ENCODE measurements at regions of chr1 and their contacts with region 1.

Region 1: DNA sequence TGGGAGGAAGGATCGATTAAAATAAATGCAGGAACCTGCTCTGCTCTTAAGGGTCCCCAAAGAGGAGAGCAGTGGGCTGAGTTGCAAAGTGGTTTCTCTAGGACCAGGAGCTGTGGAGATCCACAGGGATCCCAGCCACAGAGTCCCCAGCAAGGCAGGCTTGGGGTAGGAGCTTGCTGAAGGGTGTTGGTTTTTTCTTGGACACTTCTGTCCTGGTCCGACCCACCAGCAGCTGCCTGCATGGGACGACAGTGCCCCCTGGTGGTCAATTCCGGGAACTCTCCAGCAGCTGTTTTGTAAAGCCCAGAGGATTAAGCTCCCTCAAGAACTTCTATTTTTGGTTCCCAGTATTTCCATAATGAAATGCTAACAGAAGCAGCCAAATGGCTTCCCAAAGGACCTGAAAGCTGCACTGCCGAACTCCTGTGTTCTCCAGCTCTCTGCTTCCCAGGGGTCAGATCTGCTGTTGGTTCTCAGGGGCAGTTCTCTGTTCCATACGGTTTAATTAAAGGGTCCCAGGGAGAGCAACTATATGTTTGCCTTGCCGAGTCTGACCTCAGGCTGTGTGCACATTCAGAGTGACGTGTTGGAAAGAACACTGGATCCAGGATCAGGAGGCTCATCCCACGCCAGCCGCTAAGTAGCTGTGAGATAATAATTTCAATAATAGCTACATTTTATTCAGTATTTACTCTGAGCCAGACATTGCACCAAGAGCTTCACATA is 23.2 kb downstream of the NENF start:
- DNase-seq: peak; percentile 89
- ATAC-seq: peak; percentile 78
- H3K4me3 Mint-ChIP-seq: no peak overlapping the region
- H3K27ac Mint-ChIP-seq: no peak overlapping the region
- H3K4me1 Mint-ChIP-seq: peaks cover 15% of the 10 kb centered on the region
- H3K27me3 Mint-ChIP-seq: no peaks in the 10 kb centered on the region

Region 2: GRCh38 chr1:211675230-211676105 is 780.5 kb before region 1 on chr1 and contains the start of gene NEK2:
- CTCF ChIA-PET with region 1: interaction called, 88 read pairs
- POLR2A ChIA-PET with region 1: no interaction called
- DNase-seq: peak; percentile 95
- ATAC-seq: peak; percentile 95
- H3K4me3 Mint-ChIP-seq: peak within 1 kb of the TSS; percentile 97
- H3K27ac Mint-ChIP-seq: peak within 1 kb of the TSS; percentile 87
- H3K4me1 Mint-ChIP-seq: peaks cover 33% of the 10 kb centered on the region
- H3K27me3 Mint-ChIP-seq: peaks cover 3% of the 10 kb centered on the region
- total RNA-seq, gene NEK2: 52.6 to 54.1 TPM

Region 3: DNA sequence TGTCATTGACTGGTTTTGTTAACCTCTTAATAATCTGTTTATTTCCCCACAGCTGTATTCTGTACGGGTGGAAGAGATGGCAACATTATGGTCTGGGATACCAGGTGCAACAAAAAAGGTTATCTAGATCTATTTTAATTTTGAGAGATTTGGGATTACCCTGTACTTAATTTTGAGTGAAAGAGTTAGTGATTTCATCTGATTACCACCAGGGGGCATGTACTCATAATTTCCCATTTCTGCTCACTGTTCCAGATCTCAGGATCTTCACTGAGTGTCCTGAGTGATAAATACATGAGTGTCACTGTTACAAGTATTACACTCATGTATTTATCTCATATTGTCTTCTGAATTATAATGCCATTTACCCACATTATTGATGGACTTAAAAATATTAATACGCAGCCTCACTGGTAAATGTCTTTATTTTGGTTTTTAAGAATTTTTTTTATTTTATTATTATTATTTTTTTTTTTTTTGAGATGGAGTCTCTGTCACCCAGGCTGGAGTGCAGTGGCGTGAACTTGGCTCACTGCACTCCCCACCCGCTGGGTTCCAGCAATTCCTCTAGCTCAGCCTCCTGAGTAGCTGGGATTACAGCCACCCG is 393.0 kb before region 1 on chr1:
- CTCF ChIA-PET with region 1: interaction called, 101 read pairs
- POLR2A ChIA-PET with region 1: no interaction called
- DNase-seq: no peak
- ATAC-seq: peak; percentile 60
- H3K4me3 Mint-ChIP-seq: no peak overlapping the region
- H3K27ac Mint-ChIP-seq: no peak overlapping the region
- H3K4me1 Mint-ChIP-seq: peaks cover 3% of the 10 kb centered on the region
- H3K27me3 Mint-ChIP-seq: no peaks in the 10 kb centered on the region

Region 4: GRCh38 chr1:212101735-212102134 is 354.2 kb before region 1 on chr1:
- CTCF ChIA-PET with region 1: interaction called, 18 read pairs
- POLR2A ChIA-PET with region 1: no interaction called
- DNase-seq: no peak
- ATAC-seq: no peak
- H3K4me3 Mint-ChIP-seq: no peak overlapping the region
- H3K27ac Mint-ChIP-seq: no peak overlapping the region
- H3K4me1 Mint-ChIP-seq: peaks cover 6% of the 10 kb centered on the region
- H3K27me3 Mint-ChIP-seq: no peaks in the 10 kb centered on the region

Region 5: DNA sequence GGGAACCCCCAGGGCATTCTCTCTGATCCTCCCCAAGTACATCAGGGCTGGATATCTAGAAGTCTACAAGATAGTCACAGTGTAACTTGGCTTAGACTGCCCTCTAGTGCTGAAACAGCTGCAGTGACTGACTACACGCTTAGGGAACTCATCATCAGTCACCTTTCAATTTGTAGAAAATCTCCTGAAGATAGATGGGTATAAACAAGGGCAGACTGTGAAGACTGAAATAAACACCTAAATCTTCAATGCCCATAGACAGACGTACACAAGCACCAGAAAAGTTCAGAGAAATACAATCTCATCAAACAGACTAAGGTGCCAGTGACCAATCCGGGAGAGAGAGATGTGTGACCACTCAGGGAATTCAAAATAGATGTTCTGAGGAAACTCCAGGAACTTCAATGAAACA is 87.9 kb before region 1 on chr1:
- CTCF ChIA-PET with region 1: interaction called, 40 read pairs
- POLR2A ChIA-PET with region 1: no interaction called
- DNase-seq: peak; percentile 76
- ATAC-seq: peak; percentile 92
- H3K4me3 Mint-ChIP-seq: no peak overlapping the region
- H3K27ac Mint-ChIP-seq: no peak overlapping the region
- H3K4me1 Mint-ChIP-seq: no peaks in the 10 kb centered on the region
- H3K27me3 Mint-ChIP-seq: no peaks in the 10 kb centered on the region

Region 6: GRCh38 chr1:212440419-212440818 is 15.5 kb before region 1 on chr1:
- CTCF ChIA-PET with region 1: interaction called, 29 read pairs
- POLR2A ChIA-PET with region 1: no interaction called
- DNase-seq: no peak
- ATAC-seq: no peak
- H3K4me3 Mint-ChIP-seq: no peak overlapping the region
- H3K27ac Mint-ChIP-seq: no peak overlapping the region
- H3K4me1 Mint-ChIP-seq: no peaks in the 10 kb centered on the region
- H3K27me3 Mint-ChIP-seq: no peaks in the 10 kb centered on the region

Region 7: GRCh38 chr1:212782422-212783154 is 326.6 kb after region 1 on chr1:
- CTCF ChIA-PET with region 1: interaction called, 31 read pairs
- POLR2A ChIA-PET with region 1: no interaction called
- DNase-seq: no peak
- ATAC-seq: peak; percentile 57
- H3K4me3 Mint-ChIP-seq: no peak overlapping the region
- H3K27ac Mint-ChIP-seq: no peak overlapping the region
- H3K4me1 Mint-ChIP-seq: no peaks in the 10 kb centered on the region
- H3K27me3 Mint-ChIP-seq: no peaks in the 10 kb centered on the region

Measured in activated CD8-positive, alpha-beta T cell treated with anti-CD3 and anti-CD28 coated beads, Interleukin-2, amount 10 ng/mL, durations not matched to agents 7 days and 5 days (primary cell).